Ascending aorta (tissue), 2 donors: ENCODE measurements at regions of chr6 and their contacts with region 1.

Region 1: DNA sequence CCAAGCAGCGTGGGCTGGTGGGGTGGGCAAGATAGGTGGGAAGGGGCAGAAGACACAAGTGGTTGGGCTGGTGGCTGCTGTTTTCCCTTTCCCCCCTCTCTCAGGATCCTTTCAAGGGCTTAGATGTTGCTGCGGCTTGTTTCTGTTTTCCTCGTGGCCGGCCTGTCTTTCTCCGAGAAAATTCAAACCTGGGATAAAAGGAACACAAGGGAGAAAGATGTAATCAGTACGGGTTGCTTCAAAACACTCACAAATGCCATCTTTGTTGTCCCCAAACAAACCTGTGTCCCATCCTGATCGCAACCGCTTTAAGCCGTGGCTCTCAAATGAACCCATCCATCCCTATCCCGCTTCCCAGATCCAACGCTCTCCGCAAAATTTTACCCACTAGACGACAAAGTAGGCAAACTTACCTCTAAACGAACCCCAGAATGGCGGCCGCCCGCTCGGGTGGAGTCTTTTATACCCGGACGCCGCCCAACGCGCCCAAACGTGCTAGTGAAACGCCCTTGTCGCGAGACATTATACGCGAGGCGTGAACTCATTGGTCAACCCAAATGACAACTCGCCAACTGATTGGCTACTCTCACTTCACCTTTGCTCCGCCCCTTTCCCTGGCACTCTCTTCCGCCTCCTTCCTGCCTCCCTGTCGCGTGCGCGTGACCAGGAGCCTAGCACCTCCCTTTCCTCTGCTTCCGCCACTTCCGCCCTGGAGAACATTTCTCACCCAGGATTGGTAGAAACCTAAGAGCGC is at the start of gene PPP1R10:
- DNase-seq: peak; percentile 97 to 100
- H3K4me3 ChIP-seq: peak within 1 kb of the TSS; percentile 77 to 94
- H3K27ac ChIP-seq: peak within 1 kb of the TSS; percentile 95 to 96
- H3K4me1 ChIP-seq: peaks cover 16 to 32% of the 10 kb centered on the region in 2 donors
- H3K27me3 ChIP-seq: no peaks in the 10 kb centered on the region
- CTCF ChIP-seq: no peak
- total RNA-seq, gene PPP1R10: 52.6 TPM

Region 2: GRCh38 chr6:30556066-30556905 is 60.7 kb before region 1 on chr6 and contains the start of gene GNL1:
- intact Hi-C with region 1: loop called (anchors 2 kb)
- DNase-seq: peak; percentile 80 to 97
- H3K4me3 ChIP-seq: peak within 1 kb of the TSS; percentile 80 to 85
- H3K27ac ChIP-seq: peak within 1 kb of the TSS; percentile 98 to 100
- H3K4me1 ChIP-seq: peaks cover 5 to 19% of the 10 kb centered on the region in 2 donors
- H3K27me3 ChIP-seq: no peaks in the 10 kb centered on the region
- CTCF ChIP-seq: no peak
- total RNA-seq, gene GNL1: 33.0 TPM

Region 3: GRCh38 chr6:30678964-30679726 is 62.2 kb after region 1 on chr6:
- intact Hi-C with region 1: loop called (anchors 2 kb)
- DNase-seq: peak; percentile 38 to 93
- H3K4me3 ChIP-seq: peak overlapping the region; percentile 32 to 91
- H3K27ac ChIP-seq: peak overlapping the region; percentile 99
- H3K4me1 ChIP-seq: peaks cover 11 to 35% of the 10 kb centered on the region in 2 donors
- H3K27me3 ChIP-seq: no peaks in the 10 kb centered on the region
- CTCF ChIP-seq: peak; percentile 94 to 98 (median 97)

Region 4: GRCh38 chr6:30742316-30743098 is 125.5 kb after region 1 on chr6 and contains the start of gene FLOT1:
- intact Hi-C with region 1: loop called (anchors 5 kb)
- DNase-seq: peak; percentile 95 to 99
- H3K4me3 ChIP-seq: peak within 1 kb of the TSS; percentile 89 to 91
- H3K27ac ChIP-seq: peak within 1 kb of the TSS; percentile 94 to 97
- H3K4me1 ChIP-seq: peaks cover 8 to 22% of the 10 kb centered on the region in 2 donors
- H3K27me3 ChIP-seq: no peaks in the 10 kb centered on the region
- CTCF ChIP-seq: no peak
- total RNA-seq, gene FLOT1: 123 TPM

Region 5: DNA sequence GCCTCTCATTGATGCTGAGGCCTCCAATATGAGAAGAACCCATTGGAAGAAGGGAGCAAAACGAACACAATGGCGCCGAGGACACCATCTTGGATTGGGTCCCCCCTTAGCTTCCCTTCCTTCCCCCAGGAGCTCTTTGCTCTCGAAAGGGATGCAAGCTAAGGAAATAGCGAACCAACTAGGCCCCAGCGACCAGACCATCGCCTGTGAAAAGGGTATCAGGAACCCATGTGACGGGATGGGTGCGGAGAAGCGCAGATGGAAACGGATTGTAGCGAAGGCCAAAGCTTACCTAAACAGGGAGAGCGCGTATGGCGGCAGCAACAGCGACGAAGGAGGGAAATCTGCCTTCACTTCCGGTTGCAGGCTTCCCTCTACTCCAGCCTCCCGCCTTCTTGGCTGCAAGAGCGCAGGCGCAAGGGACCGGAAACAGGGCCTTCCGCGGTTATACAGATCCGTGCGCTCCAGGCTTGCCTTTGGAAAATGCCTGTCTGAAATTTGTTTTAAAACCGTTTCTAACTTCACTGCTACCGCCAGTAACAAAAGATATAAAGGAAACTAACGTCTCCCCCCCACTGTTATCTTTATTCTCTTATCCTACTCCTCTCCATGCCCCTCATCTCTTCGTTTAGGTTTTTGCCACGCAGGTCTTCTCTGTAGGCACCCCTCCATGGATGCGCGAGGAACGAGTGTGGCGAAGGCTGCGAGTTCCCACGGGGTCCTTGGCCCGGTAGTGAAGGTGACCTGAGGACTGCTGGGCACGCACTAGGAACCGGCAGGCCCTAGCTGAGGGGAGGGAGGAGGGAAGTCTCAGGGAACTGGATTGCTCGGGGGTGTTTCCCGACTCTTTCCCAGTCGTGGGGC is 924.9 kb after region 1 on chr6 and contains the start of gene DDX39B:
- intact Hi-C with region 1: loop called (anchors 10 kb)
- DNase-seq: peak; percentile 83 to 97
- H3K4me3 ChIP-seq: peak within 1 kb of the TSS; percentile 76 to 88
- H3K27ac ChIP-seq: peak within 1 kb of the TSS; percentile 94 to 95
- H3K4me1 ChIP-seq: peaks cover 13 to 32% of the 10 kb centered on the region in 2 donors
- H3K27me3 ChIP-seq: no peaks in the 10 kb centered on the region
- CTCF ChIP-seq: peak in 1 of 3 experiments; percentile 1
- total RNA-seq, gene DDX39B: 134 TPM